ENCODE measurements at regions of chr9 and their contacts with region 1.

Region 1: GRCh38 chr9:36956908-36957307 is 77.2 kb downstream of the PAX5 start:
- DNase-seq: no peak
- H3K4me3 ChIP-seq: no peak overlapping the region
- H3K27ac ChIP-seq: no peak overlapping the region
- H3K4me1 ChIP-seq: no peaks in the 10 kb centered on the region; a peak in 1 of 4 replicates
- H3K27me3 ChIP-seq: peaks cover 19% of the 10 kb centered on the region
- CTCF ChIP-seq: no peak
- EP300 ChIP-seq: no peak
- RAD21 ChIP-seq: no peak

Region 2: GRCh38 chr9:36970007-36970888 is 13.3 kb after region 1 on chr9:
- CTCF ChIA-PET with region 1: interaction called, 12 read pairs
- POLR2A ChIA-PET with region 1: no interaction called
- DNase-seq: no peak
- H3K4me3 ChIP-seq: no peak overlapping the region
- H3K27ac ChIP-seq: no peak overlapping the region
- H3K4me1 ChIP-seq: peaks cover 0 to 2% of the 10 kb centered on the region in 2 experiments; a peak in 1 of 4 replicates
- H3K27me3 ChIP-seq: no peaks in the 10 kb centered on the region; the same call in 1 of the 2 replicates
- CTCF ChIP-seq: no peak
- EP300 ChIP-seq: no peak
- RAD21 ChIP-seq: no peak

Region 3: DNA sequence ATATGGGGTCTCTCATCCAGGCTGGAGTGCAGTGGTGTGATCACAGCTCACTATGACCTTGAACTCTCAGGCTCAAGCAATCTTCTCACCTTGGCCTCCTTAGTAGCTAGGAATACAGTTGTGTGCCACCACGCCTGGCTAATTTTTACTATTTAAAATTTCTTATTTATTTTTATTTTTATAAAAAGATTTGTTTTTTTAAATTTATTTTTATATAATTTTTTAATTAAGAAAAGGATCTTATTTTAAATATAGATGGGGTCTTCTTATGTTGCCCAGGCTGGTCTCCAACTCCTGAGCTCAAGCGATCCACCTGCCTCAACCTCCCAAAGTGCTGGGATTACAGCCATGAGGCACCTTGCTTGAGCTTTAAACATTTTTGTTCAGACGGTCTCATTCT is 161.0 kb after region 1 on chr9:
- CTCF ChIA-PET with region 1: no interaction called
- POLR2A ChIA-PET with region 1: no interaction called
- DNase-seq: no peak
- H3K4me3 ChIP-seq: no peak overlapping the region
- H3K27ac ChIP-seq: no peak overlapping the region
- H3K4me1 ChIP-seq: peaks cover 5 to 10% of the 10 kb centered on the region in 2 experiments; a peak in 3 of 4 replicates
- H3K27me3 ChIP-seq: no peaks in the 10 kb centered on the region
- CTCF ChIP-seq: no peak
- EP300 ChIP-seq: no peak
- RAD21 ChIP-seq: no peak